ENCODE measurements at regions of chr20 and their contacts with region 1.

Region 1: DNA sequence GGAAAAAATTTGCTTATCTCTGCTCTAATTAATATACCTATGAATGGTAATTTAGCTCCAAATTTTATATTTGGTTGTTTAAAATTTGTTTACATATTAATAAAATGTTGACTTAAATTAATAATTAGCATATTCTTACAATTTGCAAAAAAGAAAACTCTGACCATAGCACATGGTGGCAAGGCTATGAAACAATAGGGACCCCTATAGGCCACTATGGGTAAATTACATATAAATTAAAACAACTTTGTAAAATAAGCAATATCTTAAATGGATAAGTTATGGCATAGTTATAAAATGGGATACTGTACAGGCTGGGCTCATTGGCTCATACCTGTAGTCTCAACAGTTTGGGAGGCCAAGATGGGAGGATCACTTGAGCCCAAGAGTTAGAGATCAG is 76.0 kb downstream of the MKKS start:
- DNase-seq: no peak
- H3K4me3 Mint-ChIP-seq: no peak overlapping the region
- H3K27ac Mint-ChIP-seq: no peak overlapping the region
- H3K4me1 Mint-ChIP-seq: peaks cover 6% of the 10 kb centered on the region
- H3K27me3 Mint-ChIP-seq: peaks cover 9% of the 10 kb centered on the region

Region 2: GRCh38 chr20:10412591-10413408 is 54.8 kb after region 1 on chr20:
- intact Hi-C with region 1: no loop called
- DNase-seq: no peak
- H3K4me3 Mint-ChIP-seq: no peak overlapping the region
- H3K27ac Mint-ChIP-seq: no peak overlapping the region
- H3K4me1 Mint-ChIP-seq: no peaks in the 10 kb centered on the region
- H3K27me3 Mint-ChIP-seq: no peaks in the 10 kb centered on the region

Region 3: DNA sequence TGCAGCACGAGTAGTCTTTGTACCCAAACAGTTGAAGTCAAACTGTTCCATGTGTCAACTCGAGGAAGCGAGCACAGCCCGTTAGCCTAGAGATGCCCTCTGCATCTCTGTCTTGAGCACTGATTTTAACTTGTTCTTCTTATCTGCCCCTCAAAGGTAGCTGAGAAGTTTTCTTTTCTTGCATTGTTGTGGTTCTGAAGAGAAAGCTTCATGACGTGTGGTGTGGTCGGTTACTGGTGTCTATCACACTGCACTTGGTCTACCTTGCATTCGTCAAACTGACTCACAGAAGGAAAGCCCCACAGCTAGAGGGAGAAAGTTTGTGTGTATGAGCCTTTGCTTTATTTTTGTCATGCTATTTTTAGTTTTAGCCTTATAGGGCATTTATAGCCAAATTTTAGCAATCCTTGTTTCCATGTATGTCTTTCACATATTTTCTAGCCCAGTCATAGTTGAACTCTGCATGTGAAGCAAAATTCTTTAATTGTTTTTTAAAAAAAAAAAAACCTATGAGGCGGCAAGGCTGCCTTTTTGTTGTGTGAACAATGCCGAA is 200.7 kb after region 1 on chr20:
- intact Hi-C with region 1: loop called (anchors 5 kb)
- DNase-seq: peak; percentile 53
- H3K4me3 Mint-ChIP-seq: no peak overlapping the region
- H3K27ac Mint-ChIP-seq: peak overlapping the region; percentile 61
- H3K4me1 Mint-ChIP-seq: peaks cover 36% of the 10 kb centered on the region
- H3K27me3 Mint-ChIP-seq: no peaks in the 10 kb centered on the region